Activated B cell treated with CpG ODN at 0.5 μM for 24 hours (primary cell): ENCODE measurements at regions of chr1 and their contacts with region 1.

Region 1: DNA sequence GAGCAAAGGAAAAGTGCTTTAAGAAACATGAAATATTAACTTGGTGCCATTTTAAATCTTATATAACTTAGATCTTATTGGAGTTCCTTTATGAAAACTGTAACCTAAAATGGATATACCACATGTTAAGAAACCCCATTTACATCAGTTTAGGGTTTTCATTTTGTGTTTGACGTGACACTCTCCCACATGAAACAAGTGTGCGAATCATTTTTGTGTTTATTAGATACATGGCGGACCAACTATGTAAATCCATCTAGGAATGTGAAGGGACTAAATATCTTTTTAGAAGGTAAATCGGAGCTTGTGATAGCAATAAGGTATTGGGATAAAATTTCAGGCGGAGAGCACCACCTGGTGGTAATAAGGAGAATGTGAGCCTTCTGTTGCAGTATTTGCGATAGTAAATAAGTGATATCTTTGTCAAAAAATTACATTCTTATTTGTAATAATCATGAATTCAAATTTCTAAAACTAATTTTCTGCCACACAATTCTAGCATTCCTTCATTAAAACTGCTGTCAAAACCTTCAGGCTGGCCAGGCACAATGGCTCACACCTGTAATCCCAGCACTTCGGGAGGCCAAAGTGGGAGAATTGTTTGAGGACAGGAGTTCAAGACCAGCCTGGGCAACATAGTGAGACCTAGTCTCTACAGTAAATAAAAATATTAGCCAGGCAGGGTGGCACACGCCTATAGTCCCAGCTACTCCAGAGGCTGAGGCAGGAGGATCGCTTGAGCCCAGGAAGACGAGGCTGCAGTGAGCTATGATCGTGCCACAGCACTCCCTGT is 31.3 kb downstream of the SMAP2 start:
- DNase-seq: no peak
- ATAC-seq: no peak
- H3K4me3 Mint-ChIP-seq: peak overlapping the region; percentile 56
- H3K27ac Mint-ChIP-seq: peak overlapping the region; percentile 84
- H3K4me1 Mint-ChIP-seq: peaks cover 62% of the 10 kb centered on the region
- H3K27me3 Mint-ChIP-seq: no peaks in the 10 kb centered on the region
- CTCF ChIP-seq: peak; percentile 86

Region 2: DNA sequence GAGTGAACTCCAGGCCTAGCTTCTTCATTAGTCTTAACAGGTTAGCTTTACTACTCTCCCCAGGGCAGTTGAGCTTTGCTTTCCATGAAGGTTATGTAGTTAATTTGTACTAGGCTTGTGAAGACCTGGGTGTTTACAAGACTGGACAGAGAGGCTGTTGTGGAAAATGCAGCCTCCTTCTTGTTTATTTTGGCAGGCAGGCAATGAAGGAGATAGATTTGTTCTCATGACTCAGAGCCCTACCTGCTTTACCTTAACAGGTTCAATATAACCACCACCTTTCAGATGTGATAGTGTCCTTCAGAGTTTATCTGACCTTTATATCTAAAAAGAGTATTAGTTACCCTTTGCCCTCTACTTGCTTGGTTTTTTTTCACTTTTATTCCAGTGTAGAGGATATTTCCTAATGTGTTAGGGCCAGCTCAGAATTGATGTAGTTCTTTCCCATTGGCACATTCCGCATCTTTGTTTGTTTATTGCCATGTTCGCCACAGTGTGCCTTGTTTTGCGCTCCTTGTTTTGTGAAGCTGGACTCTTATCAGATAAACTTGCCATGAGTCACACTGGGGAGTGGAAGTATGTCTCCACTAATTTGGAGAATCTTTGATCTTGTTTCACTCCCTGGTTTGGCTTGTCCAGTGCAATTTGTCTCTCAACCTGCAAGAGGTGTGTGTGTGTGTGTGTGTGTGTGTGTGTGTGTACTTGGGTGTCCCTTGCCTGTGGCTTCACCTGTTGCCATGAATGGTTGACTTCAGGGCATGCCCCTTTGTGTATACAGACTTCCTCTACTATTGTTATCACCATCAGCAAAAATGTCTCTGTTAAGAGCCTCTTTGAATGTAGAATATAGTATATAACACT is 1287.8 kb before region 1 on chr1:
- CTCF ChIA-PET with region 1: no interaction called
- POLR2A ChIA-PET with region 1: no interaction called
- intact Hi-C with region 1: no loop called
- DNase-seq: no peak
- ATAC-seq: no peak
- H3K4me3 Mint-ChIP-seq: no peak overlapping the region
- H3K27ac Mint-ChIP-seq: no peak overlapping the region
- H3K4me1 Mint-ChIP-seq: no peaks in the 10 kb centered on the region
- H3K27me3 Mint-ChIP-seq: no peaks in the 10 kb centered on the region
- CTCF ChIP-seq: no peak

Region 3: DNA sequence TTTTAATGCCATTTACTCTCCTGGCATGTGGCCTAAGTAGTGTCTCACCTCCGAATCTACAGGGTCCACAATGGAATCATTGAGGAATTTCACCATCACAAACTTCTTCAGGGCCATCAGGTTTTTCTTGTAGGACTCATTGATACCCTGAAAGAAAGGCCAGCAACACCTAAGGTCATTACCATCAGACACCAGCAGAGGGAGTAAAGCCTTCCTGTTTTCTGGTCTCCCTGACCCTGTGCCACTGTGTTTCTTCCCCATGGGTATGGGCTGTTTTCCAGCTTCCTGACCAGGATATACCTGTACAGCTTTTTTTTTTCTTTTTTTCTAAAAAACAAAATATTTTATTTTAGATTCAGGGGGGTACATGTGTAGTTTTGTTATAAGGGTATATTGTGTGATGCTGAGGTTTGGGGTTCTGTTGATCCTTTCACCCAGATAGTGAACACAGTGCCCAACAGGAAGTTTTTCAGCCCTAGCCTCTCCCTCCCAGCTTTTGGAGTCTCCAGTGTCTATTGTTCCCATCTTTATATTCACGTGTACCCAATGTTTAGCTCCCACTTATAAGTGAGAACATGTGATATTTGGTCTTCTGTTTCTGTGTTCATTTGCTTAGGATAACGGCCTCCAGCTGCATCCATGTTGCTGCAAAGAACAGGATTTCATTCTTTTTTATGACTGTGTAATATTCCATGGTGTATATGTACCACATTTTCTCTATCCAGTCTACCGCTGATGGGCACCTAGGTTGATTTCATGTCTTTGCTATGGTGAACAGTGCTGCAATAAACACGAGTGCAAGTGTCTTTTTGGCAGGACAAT is 326.1 kb before region 1 on chr1:
- CTCF ChIA-PET with region 1: interaction called, 4 read pairs
- POLR2A ChIA-PET with region 1: interaction called, 4 read pairs
- intact Hi-C with region 1: loop called (anchors 2 kb)
- DNase-seq: no peak
- ATAC-seq: peak; percentile 92
- H3K4me3 Mint-ChIP-seq: no peak overlapping the region
- H3K27ac Mint-ChIP-seq: no peak overlapping the region
- H3K4me1 Mint-ChIP-seq: peaks cover 13% of the 10 kb centered on the region
- H3K27me3 Mint-ChIP-seq: no peaks in the 10 kb centered on the region
- CTCF ChIP-seq: peak; percentile 74

Region 4: GRCh38 chr1:40153073-40153770 is 251.6 kb before region 1 on chr1:
- CTCF ChIA-PET with region 1: interaction called, 34 read pairs
- POLR2A ChIA-PET with region 1: interaction called, 5 read pairs
- intact Hi-C with region 1: loop called (anchors 1 kb)
- DNase-seq: no peak
- ATAC-seq: peak; percentile 77
- H3K4me3 Mint-ChIP-seq: peak overlapping the region; percentile 74
- H3K27ac Mint-ChIP-seq: peak overlapping the region; percentile 90
- H3K4me1 Mint-ChIP-seq: peaks cover 27% of the 10 kb centered on the region
- H3K27me3 Mint-ChIP-seq: no peaks in the 10 kb centered on the region
- CTCF ChIP-seq: no peak

Region 5: DNA sequence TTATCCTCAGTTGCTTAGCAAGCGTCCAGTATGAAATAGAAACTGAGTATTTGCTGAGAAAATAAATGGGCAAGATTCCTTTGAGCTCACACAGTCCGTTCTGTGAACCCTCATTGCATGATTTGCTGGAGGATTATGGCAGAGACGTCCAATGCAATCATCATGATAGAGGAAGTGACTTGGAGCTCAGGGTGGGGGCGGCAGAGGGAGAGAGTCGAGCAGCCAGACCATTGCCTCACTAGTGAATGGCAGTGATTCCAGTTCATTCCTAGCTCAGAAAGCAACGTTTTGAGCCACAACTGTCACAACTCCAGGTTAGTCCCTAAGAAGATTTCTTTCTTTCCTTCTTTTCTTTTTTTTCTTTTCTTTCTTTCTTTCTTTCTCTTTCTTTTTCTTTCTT is 60.3 kb before region 1 on chr1:
- CTCF ChIA-PET with region 1: interaction called, 184 read pairs
- POLR2A ChIA-PET with region 1: interaction called, 28 read pairs
- intact Hi-C with region 1: loop called (anchors 1 kb)
- DNase-seq: no peak
- ATAC-seq: peak; percentile 85
- H3K4me3 Mint-ChIP-seq: peak overlapping the region; percentile 75
- H3K27ac Mint-ChIP-seq: peak overlapping the region; percentile 80
- H3K4me1 Mint-ChIP-seq: peaks cover 53% of the 10 kb centered on the region
- H3K27me3 Mint-ChIP-seq: no peaks in the 10 kb centered on the region
- CTCF ChIP-seq: no peak

Region 6: GRCh38 chr1:40363721-40364120 is 41.1 kb before region 1 on chr1:
- CTCF ChIA-PET with region 1: interaction called, 30 read pairs
- POLR2A ChIA-PET with region 1: interaction called, 10 read pairs
- intact Hi-C with region 1: no loop called
- DNase-seq: peak; percentile 45
- ATAC-seq: peak; percentile 100
- H3K4me3 Mint-ChIP-seq: peak overlapping the region; percentile 5
- H3K27ac Mint-ChIP-seq: peak overlapping the region; percentile 74
- H3K4me1 Mint-ChIP-seq: peaks cover 19% of the 10 kb centered on the region
- H3K27me3 Mint-ChIP-seq: no peaks in the 10 kb centered on the region
- CTCF ChIP-seq: no peak

Region 7: GRCh38 chr1:40385437-40386358 is 19.2 kb before region 1 on chr1:
- CTCF ChIA-PET with region 1: interaction called, 24 read pairs
- POLR2A ChIA-PET with region 1: interaction called, 371 read pairs
- intact Hi-C with region 1: loop called (anchors 1 kb)
- DNase-seq: no peak
- ATAC-seq: peak; percentile 71
- H3K4me3 Mint-ChIP-seq: peak overlapping the region; percentile 74
- H3K27ac Mint-ChIP-seq: peak overlapping the region; percentile 96
- H3K4me1 Mint-ChIP-seq: peaks cover 97% of the 10 kb centered on the region
- H3K27me3 Mint-ChIP-seq: no peaks in the 10 kb centered on the region
- CTCF ChIP-seq: no peak

Region 8: DNA sequence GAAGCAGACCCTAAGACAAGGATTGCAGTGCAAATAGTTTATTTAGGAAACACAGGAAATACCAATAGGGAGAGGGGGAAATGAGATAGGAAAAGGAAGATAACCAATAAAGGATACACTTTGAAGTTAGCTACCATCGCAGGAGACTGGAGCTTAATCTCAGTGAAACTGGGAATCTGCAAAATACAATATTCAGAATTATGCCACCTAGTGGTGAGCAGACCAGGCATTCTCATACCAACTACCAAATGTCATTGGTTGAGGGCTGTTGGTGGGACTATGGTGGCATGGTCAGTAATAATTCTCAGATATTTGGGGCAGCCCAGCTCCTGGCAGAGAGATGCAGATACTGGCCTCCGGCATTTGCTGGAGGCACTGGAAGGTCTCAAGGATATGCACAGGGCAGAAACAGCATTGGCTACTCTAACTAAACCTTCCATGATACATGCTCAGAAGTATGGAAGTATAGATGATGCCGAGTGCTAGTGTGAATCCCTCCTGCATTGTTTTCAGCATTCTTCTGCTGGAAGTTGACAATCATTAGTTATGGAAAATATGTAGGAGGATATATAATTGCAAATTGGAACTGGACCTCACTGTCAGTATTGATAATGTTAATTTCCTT is 33.6 kb after region 1 on chr1:
- CTCF ChIA-PET with region 1: no interaction called
- POLR2A ChIA-PET with region 1: no interaction called
- intact Hi-C with region 1: no loop called
- DNase-seq: no peak
- ATAC-seq: peak; percentile 49
- H3K4me3 Mint-ChIP-seq: no peak overlapping the region
- H3K27ac Mint-ChIP-seq: no peak overlapping the region
- H3K4me1 Mint-ChIP-seq: peaks cover 4% of the 10 kb centered on the region
- H3K27me3 Mint-ChIP-seq: no peaks in the 10 kb centered on the region
- CTCF ChIP-seq: no peak

Region 9: DNA sequence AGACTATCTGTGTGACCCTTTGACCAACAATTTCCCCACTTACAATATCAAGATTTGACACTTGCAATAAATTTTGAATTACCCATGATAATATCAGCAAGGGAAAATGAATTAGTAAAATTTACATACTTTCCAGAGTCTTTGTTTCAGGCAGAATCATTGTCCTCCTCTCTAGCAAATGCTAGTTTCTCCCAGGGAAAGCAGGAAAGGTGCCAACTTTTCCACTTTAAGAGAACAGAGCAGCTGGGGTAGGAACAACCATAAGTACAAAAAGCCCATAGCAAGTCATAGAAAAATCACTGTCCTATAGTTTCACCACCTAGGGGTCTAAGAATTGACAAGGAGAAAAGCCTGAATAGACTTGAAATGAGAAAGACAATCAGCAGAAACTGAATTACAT is 1681.3 kb after region 1 on chr1:
- CTCF ChIA-PET with region 1: no interaction called
- POLR2A ChIA-PET with region 1: no interaction called
- intact Hi-C with region 1: no loop called
- DNase-seq: no peak
- ATAC-seq: no peak
- H3K4me3 Mint-ChIP-seq: no peak overlapping the region
- H3K27ac Mint-ChIP-seq: no peak overlapping the region
- H3K4me1 Mint-ChIP-seq: no peaks in the 10 kb centered on the region
- H3K27me3 Mint-ChIP-seq: peaks cover 39% of the 10 kb centered on the region
- CTCF ChIP-seq: no peak